Activated CD4-positive, alpha-beta memory T cell treated with anti-CD3 and anti-CD28 coated beads for 36 hours (primary cell): ENCODE measurements at regions of chr2 and their contacts with region 1.

Region 1: DNA sequence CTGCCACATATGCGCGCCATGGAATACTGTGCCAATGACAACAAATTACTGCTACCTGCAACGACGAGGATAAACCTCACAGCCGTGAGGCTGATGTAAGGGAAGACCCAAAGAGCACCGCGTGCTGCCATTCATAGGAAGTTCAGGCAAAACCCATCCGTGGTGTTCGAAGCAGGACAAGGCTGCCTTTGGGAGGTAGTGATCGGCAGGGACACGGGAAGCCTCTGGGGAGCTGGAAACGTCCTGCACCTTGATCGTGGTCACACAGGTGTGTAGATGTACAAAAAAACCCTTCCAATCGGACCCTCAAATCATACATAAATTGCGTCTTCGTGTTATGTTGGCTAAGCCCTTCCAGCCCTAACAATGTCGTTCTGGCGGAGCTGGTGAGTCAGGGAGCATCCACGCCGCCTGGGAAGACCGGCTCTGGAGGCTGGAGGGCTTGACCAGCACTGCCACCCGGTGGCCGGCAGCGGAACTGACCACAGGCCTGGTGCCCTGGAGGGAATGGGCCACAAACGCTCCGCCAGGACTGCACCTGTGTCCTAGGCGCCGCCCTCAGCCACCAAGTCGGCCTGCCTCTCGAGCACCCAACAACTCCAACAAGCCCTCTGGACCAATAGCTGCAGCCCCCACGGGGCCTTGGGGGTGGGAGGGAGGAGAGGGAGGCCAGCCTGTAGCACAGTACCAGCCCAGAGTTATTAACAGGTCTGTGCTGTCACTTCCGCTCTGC is 4.1 kb upstream of the NEURL3 start:
- DNase-seq: peak; percentile 83
- H3K4me3 Mint-ChIP-seq: no peak overlapping the region
- H3K27ac Mint-ChIP-seq: no peak overlapping the region
- H3K4me1 Mint-ChIP-seq: peaks cover 30% of the 10 kb centered on the region
- H3K27me3 Mint-ChIP-seq: peaks cover 6% of the 10 kb centered on the region

Region 2: DNA sequence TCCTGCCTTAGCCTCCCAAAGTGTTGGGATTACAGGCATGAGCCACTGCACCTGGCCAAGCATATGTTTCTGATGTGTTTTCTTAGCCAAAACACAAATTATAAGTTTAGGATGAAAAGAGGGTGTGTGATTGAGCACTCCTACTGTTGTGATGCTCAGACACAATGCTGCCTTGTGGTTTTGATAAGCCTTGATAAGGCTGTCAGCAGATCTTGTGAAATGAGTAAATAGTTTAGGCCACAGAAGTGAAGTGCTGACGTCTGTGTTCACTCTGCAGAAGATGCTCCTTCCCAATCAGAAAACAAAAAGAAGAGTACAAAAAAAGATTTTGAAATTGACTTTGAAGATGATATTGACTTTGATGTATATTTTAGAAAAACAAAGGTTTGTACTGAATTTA is 149.4 kb before region 1 on chr2:
- CTCF ChIA-PET with region 1: interaction called, 3 read pairs
- POLR2A ChIA-PET with region 1: no interaction called
- intact Hi-C with region 1: loop called (anchors 2 kb)
- DNase-seq: no peak
- H3K4me3 Mint-ChIP-seq: no peak overlapping the region
- H3K27ac Mint-ChIP-seq: no peak overlapping the region
- H3K4me1 Mint-ChIP-seq: peaks cover 14% of the 10 kb centered on the region
- H3K27me3 Mint-ChIP-seq: no peaks in the 10 kb centered on the region

Region 3: GRCh38 chr2:96470636-96471035 is 38.6 kb before region 1 on chr2:
- CTCF ChIA-PET with region 1: interaction called, 13 read pairs
- POLR2A ChIA-PET with region 1: no interaction called
- intact Hi-C with region 1: loop called (anchors 1 kb)
- DNase-seq: peak; percentile 70
- H3K4me3 Mint-ChIP-seq: no peak overlapping the region
- H3K27ac Mint-ChIP-seq: no peak overlapping the region
- H3K4me1 Mint-ChIP-seq: peaks cover 7% of the 10 kb centered on the region
- H3K27me3 Mint-ChIP-seq: peaks cover 4% of the 10 kb centered on the region

Region 4: DNA sequence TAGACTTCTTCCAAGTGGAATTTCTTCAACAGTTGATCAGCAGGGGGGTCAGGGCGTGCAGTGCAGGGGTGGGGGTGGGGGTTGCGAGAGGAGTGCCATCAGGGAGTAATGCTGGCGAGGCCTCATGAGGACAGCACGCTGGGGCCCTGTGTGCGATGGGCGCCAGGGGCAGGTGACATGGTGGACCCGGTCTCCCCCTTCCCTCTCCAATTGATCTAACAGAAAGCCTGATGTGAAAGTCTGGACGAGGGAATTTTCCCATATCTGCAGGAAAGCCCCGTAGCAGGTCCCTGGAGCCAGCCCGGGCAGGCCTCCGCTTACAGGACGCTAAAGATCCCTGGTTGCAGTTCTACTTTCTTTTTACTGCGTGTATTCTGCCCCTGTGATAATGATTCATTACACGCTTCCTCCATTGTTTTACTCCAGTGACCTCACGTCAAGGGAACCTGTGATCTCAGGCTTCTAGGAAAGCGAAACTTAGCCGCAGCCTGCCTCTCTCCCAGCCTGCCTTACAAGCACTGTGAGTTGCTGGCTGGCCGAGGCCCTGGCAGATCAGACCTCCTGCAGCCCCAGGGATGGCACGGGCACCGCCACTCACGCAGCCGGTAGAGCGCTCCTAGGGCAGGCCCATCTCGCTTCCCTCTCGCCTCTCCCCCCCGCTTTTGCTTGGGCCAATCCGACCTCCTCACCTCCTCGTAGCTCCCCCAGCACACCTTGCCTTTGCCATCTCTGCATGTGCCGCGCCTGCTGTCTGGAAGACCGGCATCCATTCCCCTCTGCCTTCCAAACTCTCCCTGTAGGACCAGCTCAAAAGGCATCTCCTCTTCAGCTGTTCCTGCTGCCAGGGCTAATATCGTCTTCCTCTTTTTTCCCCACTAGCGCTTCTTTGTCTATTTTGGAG is 23.3 kb before region 1 on chr2:
- CTCF ChIA-PET with region 1: interaction called, 5 read pairs
- POLR2A ChIA-PET with region 1: no interaction called
- intact Hi-C with region 1: loop called (anchors 1 kb)
- DNase-seq: peak; percentile 93
- H3K4me3 Mint-ChIP-seq: peak overlapping the region; percentile 95
- H3K27ac Mint-ChIP-seq: peak overlapping the region; percentile 99
- H3K4me1 Mint-ChIP-seq: peaks cover 47% of the 10 kb centered on the region
- H3K27me3 Mint-ChIP-seq: no peaks in the 10 kb centered on the region

Region 5: DNA sequence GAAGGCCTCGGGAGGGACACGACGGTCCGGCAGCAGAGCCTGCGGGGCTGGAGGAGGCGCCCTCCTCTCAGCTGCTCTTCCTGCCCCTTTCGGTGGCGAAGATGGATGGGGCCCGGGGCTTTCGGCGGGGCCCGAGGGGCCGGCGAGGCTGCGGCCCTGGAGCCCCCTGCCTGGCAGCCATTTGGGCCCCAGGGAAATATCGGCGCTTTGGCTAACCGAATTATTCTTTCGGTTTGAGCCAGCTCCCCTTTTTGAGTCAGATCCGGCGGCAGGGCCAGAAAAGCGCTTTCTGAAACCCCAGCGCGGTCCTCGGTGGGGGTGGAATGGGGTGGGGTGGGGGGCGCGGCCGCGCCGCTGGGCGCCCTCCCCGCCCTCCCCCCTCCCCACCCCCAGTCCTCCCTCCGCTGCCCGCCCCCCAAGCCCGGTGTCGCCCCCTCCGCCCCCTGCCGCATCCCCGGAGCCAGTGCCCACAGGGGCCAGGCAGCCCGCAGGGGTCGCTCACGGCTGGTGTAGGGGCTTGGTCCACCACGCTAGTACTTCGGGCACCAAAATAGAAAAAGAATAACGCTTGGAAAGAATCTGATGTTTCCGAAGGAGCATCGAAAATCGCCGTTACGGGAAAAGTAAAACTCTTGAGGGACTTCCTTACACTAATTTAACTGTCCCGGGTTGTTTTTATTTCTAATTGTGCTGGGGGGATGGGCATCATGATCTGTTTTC is 18.2 kb after region 1 on chr2:
- CTCF ChIA-PET with region 1: interaction called, 7 read pairs
- POLR2A ChIA-PET with region 1: interaction called, 8 read pairs
- intact Hi-C with region 1: loop called (anchors 2 kb)
- DNase-seq: peak; percentile 89
- H3K4me3 Mint-ChIP-seq: peak overlapping the region; percentile 73
- H3K27ac Mint-ChIP-seq: peak overlapping the region; percentile 98
- H3K4me1 Mint-ChIP-seq: peaks cover 96% of the 10 kb centered on the region
- H3K27me3 Mint-ChIP-seq: no peaks in the 10 kb centered on the region

Region 6: DNA sequence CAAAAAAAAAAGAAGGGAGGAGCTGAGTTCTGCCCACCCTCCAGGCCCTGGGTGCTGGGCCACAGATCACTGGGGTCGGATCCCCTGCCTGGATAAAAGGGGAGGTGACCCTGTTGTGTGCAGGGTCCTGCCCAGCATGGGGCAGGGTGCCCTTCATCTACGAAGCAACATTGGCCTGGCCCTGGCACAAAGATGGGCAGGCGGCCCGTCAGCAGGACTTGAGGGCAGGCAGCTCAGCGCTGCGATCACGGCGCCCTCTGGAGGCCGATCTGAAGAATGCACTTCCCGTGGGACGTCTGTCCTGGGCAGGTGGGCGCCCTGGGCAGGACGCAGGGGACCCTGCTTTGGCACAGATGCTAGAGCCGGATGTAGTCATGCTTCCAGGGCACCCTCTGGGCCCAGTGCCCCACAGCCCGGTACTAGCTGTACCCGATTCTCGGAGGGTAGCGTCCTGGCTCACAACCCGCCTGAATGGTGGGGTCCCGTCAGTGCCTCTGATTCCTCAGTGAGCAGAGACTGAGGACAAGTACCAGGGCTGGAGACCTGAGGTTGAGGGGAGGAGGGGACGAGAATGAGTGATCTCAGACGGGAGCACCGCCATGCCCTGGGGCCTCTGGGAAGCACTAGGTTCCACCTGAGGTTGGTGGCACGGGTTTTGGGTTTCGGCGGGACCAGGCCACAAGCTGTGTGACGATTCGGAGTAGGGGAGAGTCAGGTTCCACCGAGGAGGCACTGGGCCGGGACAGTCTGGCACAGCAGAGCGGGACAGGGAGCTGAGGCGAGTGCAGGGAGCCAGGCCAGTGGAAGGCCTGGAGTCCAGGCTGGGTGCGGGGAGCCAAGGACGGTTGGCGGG is 45.2 kb after region 1 on chr2:
- CTCF ChIA-PET with region 1: interaction called, 21 read pairs
- POLR2A ChIA-PET with region 1: interaction called, 4 read pairs
- intact Hi-C with region 1: loop called (anchors 5 kb)
- DNase-seq: peak; percentile 78
- H3K4me3 Mint-ChIP-seq: peak overlapping the region; percentile 43
- H3K27ac Mint-ChIP-seq: peak overlapping the region; percentile 77
- H3K4me1 Mint-ChIP-seq: peaks cover 41% of the 10 kb centered on the region
- H3K27me3 Mint-ChIP-seq: peaks cover 1% of the 10 kb centered on the region

Region 7: GRCh38 chr2:96888072-96889011 is 379.1 kb after region 1 on chr2:
- CTCF ChIA-PET with region 1: no interaction called
- POLR2A ChIA-PET with region 1: no interaction called
- intact Hi-C with region 1: no loop called
- DNase-seq: no peak
- H3K4me3 Mint-ChIP-seq: no peak overlapping the region
- H3K27ac Mint-ChIP-seq: no peak overlapping the region
- H3K4me1 Mint-ChIP-seq: peaks cover 25% of the 10 kb centered on the region
- H3K27me3 Mint-ChIP-seq: no peaks in the 10 kb centered on the region